ENCODE measurements at regions of chr9 and their contacts with region 1.

Region 1: GRCh38 chr9:95127249-95128176 is 190.0 kb downstream of the FANCC start:
- DNase-seq: peak; percentile 74 to 76
- ATAC-seq: peak; percentile 90 to 91
- H3K4me3 ChIP-seq: no peak overlapping the region
- H3K27ac ChIP-seq: peak overlapping the region; percentile 37 to 72; a peak in 5 of 6 replicates
- H3K4me1 ChIP-seq: peaks cover 33% of the 10 kb centered on the region
- CTCF ChIP-seq: peak; percentile 95
- EP300 ChIP-seq: no peak
- POLR2A ChIP-seq: no peak
- RAD21 ChIP-seq: peak; percentile 86 to 92

Region 2: DNA sequence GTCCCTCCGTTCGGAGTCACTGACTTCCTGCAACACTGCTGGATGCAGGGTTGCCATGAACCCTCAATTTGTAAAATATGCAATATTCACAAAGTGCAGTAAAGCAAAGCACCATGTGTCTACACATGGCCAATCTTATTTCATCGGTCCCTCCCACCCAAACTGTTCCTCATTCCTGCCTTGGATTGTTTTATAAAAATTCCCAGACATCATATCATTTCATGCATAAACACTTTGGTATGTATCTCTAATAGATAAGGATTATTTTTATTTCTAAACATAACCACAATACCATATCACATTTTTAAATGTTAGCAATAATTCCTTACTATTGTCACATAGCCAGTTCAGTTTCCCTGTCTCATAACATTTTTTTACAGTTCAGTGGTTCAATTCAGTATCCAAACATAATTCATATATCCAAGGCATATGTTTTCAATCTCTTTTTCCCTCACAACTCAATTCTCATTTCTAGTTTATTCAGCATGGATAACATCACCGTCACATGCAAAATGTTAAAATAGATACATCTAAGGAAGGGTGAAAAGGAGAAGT is 654.6 kb before region 1 on chr9:
- CTCF ChIA-PET with region 1: no interaction called
- POLR2A ChIA-PET with region 1: no interaction called
- DNase-seq: peak in 1 of 2 experiments; percentile 9
- ATAC-seq: peak; percentile 34 to 41; a peak in 2 of 6 replicates
- H3K4me3 ChIP-seq: no peak overlapping the region
- H3K27ac ChIP-seq: no peak overlapping the region
- H3K4me1 ChIP-seq: 0 out of 3 replicates have a peak, but pooled peaks cover 3% of the 10 kb centered on the region
- CTCF ChIP-seq: no peak
- EP300 ChIP-seq: no peak
- POLR2A ChIP-seq: no peak
- RAD21 ChIP-seq: no peak

Region 3: GRCh38 chr9:94649100-94649819 is 478.3 kb before region 1 on chr9:
- CTCF ChIA-PET with region 1: interaction called, 21 read pairs
- POLR2A ChIA-PET with region 1: no interaction called
- DNase-seq: peak; percentile 11 to 55
- ATAC-seq: peak; percentile 33 to 66; a peak in 5 of 6 replicates
- H3K4me3 ChIP-seq: no peak overlapping the region
- H3K27ac ChIP-seq: peak overlapping the region in 1 of 2 experiments; percentile 78; a peak in 3 of 6 replicates
- H3K4me1 ChIP-seq: peaks cover 14% of the 10 kb centered on the region; the same call in 2 of the 3 replicates
- CTCF ChIP-seq: no peak
- EP300 ChIP-seq: no peak
- POLR2A ChIP-seq: no peak
- RAD21 ChIP-seq: no peak

Region 4: GRCh38 chr9:94687451-94687850 is 440.1 kb before region 1 on chr9:
- CTCF ChIA-PET with region 1: interaction called, 284 read pairs
- POLR2A ChIA-PET with region 1: no interaction called
- DNase-seq: no peak
- ATAC-seq: no peak
- H3K4me3 ChIP-seq: no peak overlapping the region
- H3K27ac ChIP-seq: 0 out of 6 replicates have a peak overlapping the region, but pooled peaks of 1 of the 2 experiments have one; percentile 15
- H3K4me1 ChIP-seq: peaks cover 6% of the 10 kb centered on the region
- CTCF ChIP-seq: no peak
- EP300 ChIP-seq: no peak
- POLR2A ChIP-seq: no peak
- RAD21 ChIP-seq: no peak

Region 5: DNA sequence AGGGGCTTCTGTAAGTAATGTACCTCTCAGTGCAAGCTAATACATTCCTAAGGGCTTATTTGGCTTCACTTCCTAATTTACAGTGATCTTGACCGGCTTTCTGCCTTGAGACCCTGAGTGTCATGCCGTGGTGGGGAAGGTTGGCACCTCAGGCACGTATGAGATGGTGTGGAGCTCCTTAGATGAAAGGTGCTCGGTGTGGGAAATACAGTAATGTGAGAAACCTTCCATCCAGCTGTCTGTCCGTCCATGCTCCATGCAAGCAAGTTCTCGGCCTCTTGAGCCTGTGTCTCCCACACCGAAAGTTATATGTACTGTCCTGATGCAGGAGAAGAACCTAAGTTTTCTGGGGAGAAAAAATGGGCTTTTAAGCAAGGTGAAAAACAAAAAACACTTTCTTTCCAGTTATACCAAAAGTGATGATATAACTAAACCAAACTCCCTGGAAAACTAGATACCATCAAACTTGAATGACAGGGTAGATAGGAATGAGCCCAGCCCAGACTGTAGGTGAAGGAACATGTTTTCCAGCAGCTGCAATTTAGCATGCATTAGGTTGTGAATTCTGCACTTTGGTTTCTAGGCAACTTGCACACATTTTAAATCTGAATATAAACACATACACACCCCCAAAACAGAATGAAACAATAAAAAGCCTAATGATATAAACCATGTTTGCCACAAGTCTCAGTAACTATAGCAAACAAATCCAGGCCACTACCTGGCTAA is 89.6 kb before region 1 on chr9:
- CTCF ChIA-PET with region 1: no interaction called
- POLR2A ChIA-PET with region 1: no interaction called
- DNase-seq: no peak
- ATAC-seq: peak in 1 of 2 experiments; percentile 13; a peak in 1 of 6 replicates
- H3K4me3 ChIP-seq: no peak overlapping the region
- H3K27ac ChIP-seq: peak overlapping the region; percentile 6 to 47; a peak in 4 of 6 replicates
- H3K4me1 ChIP-seq: peaks cover 97% of the 10 kb centered on the region
- CTCF ChIP-seq: no peak
- EP300 ChIP-seq: no peak
- POLR2A ChIP-seq: no peak
- RAD21 ChIP-seq: no peak

Region 6: DNA sequence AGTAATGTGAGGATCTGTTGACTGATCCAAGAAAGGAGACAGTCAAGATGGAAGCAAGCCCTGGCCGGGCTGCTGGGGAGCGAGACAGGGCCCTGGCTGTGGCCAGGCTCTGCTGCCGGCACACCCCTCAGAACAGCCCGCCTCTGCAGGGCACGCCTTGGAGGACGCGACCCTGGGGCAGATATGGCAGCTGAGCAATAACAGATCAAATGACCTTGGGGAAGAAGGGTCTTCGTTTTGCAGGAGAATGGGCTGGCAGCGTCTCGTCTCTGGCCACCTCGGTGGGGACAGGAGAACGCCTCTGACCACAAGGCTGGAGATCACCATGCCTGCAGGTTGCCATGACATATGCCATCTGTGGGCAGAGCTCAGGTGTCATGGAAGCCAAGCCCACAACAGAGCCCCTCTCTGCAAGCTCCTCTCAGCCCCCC is 16.5 kb before region 1 on chr9:
- CTCF ChIA-PET with region 1: interaction called, 58 read pairs
- POLR2A ChIA-PET with region 1: interaction called, 3 read pairs
- DNase-seq: no peak
- ATAC-seq: no peak
- H3K4me3 ChIP-seq: no peak overlapping the region
- H3K27ac ChIP-seq: no peak overlapping the region
- H3K4me1 ChIP-seq: no peaks in the 10 kb centered on the region
- CTCF ChIP-seq: no peak
- EP300 ChIP-seq: no peak
- POLR2A ChIP-seq: no peak
- RAD21 ChIP-seq: no peak

Region 7: DNA sequence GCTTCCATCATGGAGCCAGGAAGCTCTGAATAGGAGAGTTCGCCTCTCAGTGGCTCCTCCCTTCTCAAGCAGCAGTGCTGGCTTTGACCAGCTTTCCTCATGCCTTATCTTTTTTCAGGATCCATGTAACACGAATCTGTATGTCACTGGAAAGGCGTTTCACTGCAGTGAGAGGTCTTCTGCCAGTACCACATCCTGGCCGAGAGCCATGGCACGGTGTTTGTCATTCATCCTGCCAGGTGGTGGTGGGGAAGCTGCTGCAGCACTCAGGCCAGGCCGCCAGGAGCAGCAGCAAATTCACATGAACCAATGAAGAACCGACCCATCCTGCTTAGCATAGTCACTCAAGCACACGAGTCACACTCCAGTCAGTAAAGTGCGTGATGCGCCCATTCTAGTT is 11.0 kb after region 1 on chr9:
- CTCF ChIA-PET with region 1: interaction called, 30 read pairs
- POLR2A ChIA-PET with region 1: interaction called, 6 read pairs
- DNase-seq: no peak
- ATAC-seq: peak in 1 of 2 experiments; percentile 55; a peak in 3 of 6 replicates
- H3K4me3 ChIP-seq: no peak overlapping the region
- H3K27ac ChIP-seq: no peak overlapping the region
- H3K4me1 ChIP-seq: no peaks in the 10 kb centered on the region
- CTCF ChIP-seq: no peak
- EP300 ChIP-seq: no peak
- POLR2A ChIP-seq: no peak
- RAD21 ChIP-seq: no peak

Region 8: DNA sequence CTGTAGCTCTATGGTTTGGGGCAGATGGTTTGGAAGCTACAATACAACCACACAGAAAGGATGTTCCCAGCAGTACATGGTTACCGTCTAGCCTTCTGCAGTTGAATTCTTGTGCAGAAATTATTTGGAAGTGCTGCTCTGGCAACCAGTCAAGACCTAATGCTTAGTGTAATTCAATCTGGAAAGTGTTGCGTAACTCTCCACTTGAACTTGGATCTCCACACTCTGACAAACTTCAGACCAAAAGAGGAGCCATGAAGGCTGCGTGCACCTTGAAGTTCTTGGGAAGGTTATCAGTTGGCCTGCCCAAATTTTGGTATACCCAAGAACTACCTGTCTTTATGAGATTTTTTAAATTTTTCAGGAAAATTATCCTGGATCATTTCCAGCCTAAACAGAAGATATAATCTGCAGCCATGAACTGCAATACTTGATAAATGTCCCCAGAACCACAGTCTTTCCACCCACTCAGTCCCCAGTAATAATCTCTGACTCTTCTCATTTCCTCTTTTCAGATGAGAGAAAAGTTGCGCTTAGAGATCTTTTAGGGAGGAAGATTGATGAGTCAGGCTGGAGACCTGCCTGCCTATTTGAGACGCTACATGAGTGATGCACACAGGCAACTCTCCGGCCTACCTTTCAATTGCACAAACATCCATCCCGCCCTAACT is 30.1 kb after region 1 on chr9:
- CTCF ChIA-PET with region 1: interaction called, 14 read pairs
- POLR2A ChIA-PET with region 1: no interaction called
- DNase-seq: peak in 1 of 2 experiments; percentile 21
- ATAC-seq: no peak
- H3K4me3 ChIP-seq: no peak overlapping the region
- H3K27ac ChIP-seq: no peak overlapping the region
- H3K4me1 ChIP-seq: peaks cover 4% of the 10 kb centered on the region; the same call in 1 of the 3 replicates
- CTCF ChIP-seq: no peak
- EP300 ChIP-seq: no peak
- POLR2A ChIP-seq: no peak
- RAD21 ChIP-seq: no peak

Region 9: GRCh38 chr9:95230046-95230445 is 102.5 kb after region 1 on chr9:
- CTCF ChIA-PET with region 1: no interaction called
- POLR2A ChIA-PET with region 1: no interaction called
- DNase-seq: peak in 1 of 2 experiments; percentile 26
- ATAC-seq: peak; percentile 50 to 72; a peak in 3 of 6 replicates
- H3K4me3 ChIP-seq: no peak overlapping the region
- H3K27ac ChIP-seq: no peak overlapping the region
- H3K4me1 ChIP-seq: peaks cover 15% of the 10 kb centered on the region
- CTCF ChIP-seq: no peak
- EP300 ChIP-seq: no peak
- POLR2A ChIP-seq: no peak
- RAD21 ChIP-seq: no peak